H1 (cell line): ENCODE measurements at regions of chr11 and their contacts with region 1.

Region 1: GRCh38 chr11:46238967-46239800 is 38.3 kb upstream of the CREB3L1 start:
- DNase-seq: peak; percentile 83 to 97
- H3K4me3 ChIP-seq: peak overlapping the region; percentile 45 to 62 (median 56); a peak in 7 of 8 replicates
- H3K27ac ChIP-seq: no peak overlapping the region
- H3K4me1 ChIP-seq: peaks cover 4 to 25% (median 14%) of the 10 kb centered on the region in 4 experiments
- H3K27me3 ChIP-seq: peaks cover 4 to 13% (median 10%) of the 10 kb centered on the region in 4 experiments; a peak in 6 of 7 replicates
- CTCF ChIP-seq: peak; percentile 89 to 98 (median 96)
- EP300 ChIP-seq: peak in 1 of 2 experiments; percentile 30; a peak in 1 of 3 replicates
- POLR2A ChIP-seq: peak in 1 of 2 experiments; percentile 48; a peak in 1 of 3 replicates
- RAD21 ChIP-seq: peak; percentile 85 to 90

Region 2: DNA sequence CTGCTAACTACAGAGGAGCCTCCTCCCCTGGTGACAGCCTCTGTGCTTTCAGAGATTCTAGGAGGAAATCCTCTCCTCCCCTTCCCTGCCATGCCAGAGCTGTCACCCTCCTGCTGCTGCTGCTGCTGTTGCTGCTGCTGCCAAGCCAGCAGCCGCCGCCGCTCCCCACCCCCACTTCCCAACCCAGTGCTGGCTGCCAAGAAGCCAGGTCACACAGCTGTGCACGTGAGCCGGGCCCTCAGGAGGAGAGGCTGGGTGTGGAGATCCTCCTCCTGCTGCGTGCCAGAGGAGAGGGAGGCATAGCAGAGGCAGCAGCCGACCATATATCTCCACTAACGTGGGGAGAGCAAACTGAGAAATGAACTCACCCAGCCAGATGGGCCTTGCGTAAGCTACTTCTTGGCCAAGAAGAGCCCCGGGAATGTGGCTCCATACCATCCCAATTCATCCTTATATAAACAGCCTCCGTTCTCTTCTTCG is 379.5 kb before region 1 on chr11:
- CTCF ChIA-PET with region 1: no interaction called
- POLR2A ChIA-PET with region 1: no interaction called
- DNase-seq: no peak
- H3K4me3 ChIP-seq: no peak overlapping the region
- H3K27ac ChIP-seq: no peak overlapping the region
- H3K4me1 ChIP-seq: peaks cover 12 to 25% (median 16%) of the 10 kb centered on the region in 4 experiments; a peak in 6 of 7 replicates
- H3K27me3 ChIP-seq: no peaks in the 10 kb centered on the region
- CTCF ChIP-seq: no peak
- EP300 ChIP-seq: 0 out of 3 replicates have a peak, but pooled peaks of 1 of the 2 experiments have one; percentile 9
- POLR2A ChIP-seq: no peak
- RAD21 ChIP-seq: no peak

Region 3: DNA sequence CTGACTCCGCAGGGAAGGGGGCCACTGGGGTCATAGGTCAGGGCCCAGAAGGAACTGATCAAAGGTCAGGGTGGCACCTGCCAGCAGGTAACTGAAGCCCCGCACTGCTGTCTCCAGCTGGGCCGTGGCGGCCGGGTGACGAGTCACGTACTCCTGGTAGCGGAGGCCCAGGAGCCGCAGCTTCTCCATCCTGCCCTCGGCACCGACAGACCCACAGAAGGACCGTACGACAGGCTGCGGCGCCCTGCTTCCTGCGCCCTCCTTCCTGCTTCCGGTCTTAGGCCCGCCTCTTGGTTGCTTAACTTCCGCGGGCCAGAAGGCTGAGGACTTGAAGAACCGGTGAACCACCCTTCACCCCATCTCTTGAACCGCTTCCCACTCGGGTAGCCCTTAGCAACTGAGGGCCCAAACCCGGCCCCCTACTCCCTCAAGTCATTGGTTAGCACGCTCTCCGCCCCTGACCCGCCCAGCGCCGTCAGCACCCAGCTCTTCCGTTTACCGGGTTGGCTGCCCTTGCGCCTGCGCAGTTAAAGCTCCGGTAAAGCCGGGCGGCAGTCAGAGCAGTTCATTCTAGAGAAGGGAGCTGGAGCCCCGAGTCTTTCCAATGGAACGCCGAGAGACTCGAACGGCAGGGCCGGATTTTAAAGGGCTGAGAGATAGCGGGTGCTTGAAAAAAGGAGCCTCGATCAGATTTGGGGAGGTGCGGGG is 321.4 kb before region 1 on chr11 and contains the start of gene PEX16:
- CTCF ChIA-PET with region 1: interaction called, 3 read pairs
- POLR2A ChIA-PET with region 1: interaction called, 10 read pairs
- DNase-seq: peak; percentile 88 to 93
- H3K4me3 ChIP-seq: peak within 1 kb of the TSS; percentile 84 to 90 (median 88)
- H3K27ac ChIP-seq: peak within 1 kb of the TSS; percentile 64; the same call in 1 of the 2 replicates
- H3K4me1 ChIP-seq: peaks cover 12 to 28% (median 20%) of the 10 kb centered on the region in 4 experiments
- H3K27me3 ChIP-seq: peaks cover 0 to 9% (median 0%) of the 10 kb centered on the region in 4 experiments; a peak in 3 of 7 replicates
- CTCF ChIP-seq: no peak
- EP300 ChIP-seq: peak in 1 of 2 experiments; percentile 5; a peak in 1 of 3 replicates
- POLR2A ChIP-seq: peak in 1 of 2 experiments; percentile 63; a peak in 2 of 3 replicates
- RAD21 ChIP-seq: no peak
- total RNA-seq, gene PEX16: 29.2 and 29.4 TPM in 2 replicates

Region 4: GRCh38 chr11:45949992-45950407 is 289.2 kb before region 1 on chr11:
- CTCF ChIA-PET with region 1: no interaction called
- POLR2A ChIA-PET with region 1: no interaction called
- DNase-seq: no peak
- H3K4me3 ChIP-seq: no peak overlapping the region
- H3K27ac ChIP-seq: no peak overlapping the region
- H3K4me1 ChIP-seq: no peaks in the 10 kb centered on the region
- H3K27me3 ChIP-seq: no peaks in the 10 kb centered on the region
- CTCF ChIP-seq: no peak
- EP300 ChIP-seq: no peak
- POLR2A ChIP-seq: no peak
- RAD21 ChIP-seq: no peak

Region 5: GRCh38 chr11:46083972-46084371 is 155.2 kb before region 1 on chr11:
- CTCF ChIA-PET with region 1: no interaction called
- POLR2A ChIA-PET with region 1: no interaction called
- DNase-seq: no peak
- H3K4me3 ChIP-seq: no peak overlapping the region
- H3K27ac ChIP-seq: no peak overlapping the region
- H3K4me1 ChIP-seq: no peaks in the 10 kb centered on the region
- H3K27me3 ChIP-seq: no peaks in the 10 kb centered on the region
- CTCF ChIP-seq: no peak
- EP300 ChIP-seq: no peak
- POLR2A ChIP-seq: no peak
- RAD21 ChIP-seq: no peak

Region 6: GRCh38 chr11:46278387-46279125 is 39.4 kb after region 1 on chr11:
- CTCF ChIA-PET with region 1: interaction called, 43 read pairs
- POLR2A ChIA-PET with region 1: interaction called, 28 read pairs
- DNase-seq: peak in 1 of 2 experiments; percentile 92
- H3K4me3 ChIP-seq: peak overlapping the region; percentile 54 to 81 (median 64)
- H3K27ac ChIP-seq: no peak overlapping the region
- H3K4me1 ChIP-seq: peaks cover 18 to 35% (median 24%) of the 10 kb centered on the region in 4 experiments; a peak in 6 of 7 replicates
- H3K27me3 ChIP-seq: no peaks in the 10 kb centered on the region
- CTCF ChIP-seq: peak; percentile 68 to 86 (median 72)
- EP300 ChIP-seq: no peak
- POLR2A ChIP-seq: no peak
- RAD21 ChIP-seq: peak; percentile 43 to 69

Region 7: DNA sequence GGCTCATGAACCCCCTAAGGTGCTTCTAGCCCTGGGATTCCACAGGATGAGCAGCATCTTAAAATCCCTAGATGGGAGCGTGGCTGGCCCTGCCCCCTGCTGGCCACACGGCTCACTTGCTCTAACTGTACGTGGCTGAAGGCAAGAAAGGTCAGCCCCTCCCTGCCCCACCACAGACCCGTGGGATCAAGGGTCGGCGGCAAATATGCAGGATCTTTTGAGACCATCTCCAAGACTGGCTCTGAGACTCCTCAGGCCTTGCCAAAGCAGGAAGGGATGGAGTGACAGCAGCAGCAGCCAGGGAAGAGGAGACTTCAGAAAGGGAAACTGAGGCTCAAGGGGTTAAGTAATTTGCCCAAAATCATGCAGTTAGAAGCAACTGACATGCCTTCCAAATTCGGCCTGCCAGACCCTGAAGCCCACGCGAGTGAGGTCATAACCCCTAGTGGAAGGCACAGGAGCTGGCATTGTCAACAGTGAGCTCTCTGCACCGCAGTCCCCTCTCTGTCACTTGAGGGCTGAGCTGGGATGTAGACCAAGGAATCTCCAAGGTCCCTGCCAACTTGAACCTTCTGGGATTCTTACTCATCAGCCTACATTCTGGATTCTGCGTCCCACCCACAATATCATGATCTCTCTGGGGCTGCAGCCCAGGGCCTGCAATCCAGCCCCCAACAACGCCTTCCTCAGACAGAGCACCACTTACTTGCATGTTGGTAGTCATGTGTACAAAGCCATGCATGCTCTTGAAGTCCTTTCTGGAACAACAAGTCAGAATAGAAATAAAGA is 69.6 kb after region 1 on chr11:
- CTCF ChIA-PET with region 1: interaction called, 858 read pairs
- POLR2A ChIA-PET with region 1: interaction called, 77 read pairs
- DNase-seq: peak; percentile 60 to 89
- H3K4me3 ChIP-seq: no peak overlapping the region
- H3K27ac ChIP-seq: no peak overlapping the region
- H3K4me1 ChIP-seq: peaks cover 0 to 12% (median 7%) of the 10 kb centered on the region in 4 experiments; a peak in 6 of 7 replicates
- H3K27me3 ChIP-seq: no peaks in the 10 kb centered on the region
- CTCF ChIP-seq: peak; percentile 89 to 98 (median 94)
- EP300 ChIP-seq: no peak
- POLR2A ChIP-seq: no peak
- RAD21 ChIP-seq: peak; percentile 88 to 93

Region 8: GRCh38 chr11:46338988-46339666 is 99.9 kb after region 1 on chr11:
- CTCF ChIA-PET with region 1: interaction called, 5 read pairs
- POLR2A ChIA-PET with region 1: interaction called, 20 read pairs
- DNase-seq: peak; percentile 87 to 91
- H3K4me3 ChIP-seq: peak overlapping the region in 3 of 4 experiments; percentile 10 to 46 (median 29); a peak in 7 of 8 replicates
- H3K27ac ChIP-seq: peak overlapping the region; percentile 77
- H3K4me1 ChIP-seq: peaks cover 34 to 59% (median 53%) of the 10 kb centered on the region in 4 experiments
- H3K27me3 ChIP-seq: peaks cover under 1 to 5% (median 5%) of the 10 kb centered on the region in 4 experiments; a peak in 6 of 7 replicates
- CTCF ChIP-seq: peak in 1 of 3 experiments; percentile 3; a peak in 1 of 4 replicates
- EP300 ChIP-seq: peak in 1 of 2 experiments; percentile 85; a peak in 1 of 3 replicates
- POLR2A ChIP-seq: peak in 1 of 2 experiments; percentile 39; a peak in 2 of 3 replicates
- RAD21 ChIP-seq: no peak; a peak in 1 of 4 replicates

Region 9: GRCh38 chr11:46392421-46393230 is 153.4 kb after region 1 on chr11:
- CTCF ChIA-PET with region 1: interaction called, 17 read pairs
- POLR2A ChIA-PET with region 1: interaction called, 7 read pairs
- DNase-seq: peak in 1 of 2 experiments; percentile 97
- H3K4me3 ChIP-seq: peak overlapping the region; percentile 26 to 62 (median 40)
- H3K27ac ChIP-seq: no peak overlapping the region
- H3K4me1 ChIP-seq: peaks cover 3 to 17% (median 15%) of the 10 kb centered on the region in 4 experiments
- H3K27me3 ChIP-seq: peaks cover 19 to 43% (median 37%) of the 10 kb centered on the region in 4 experiments
- CTCF ChIP-seq: 0 out of 4 replicates have a peak, but pooled peaks of 1 of the 3 experiments have one; percentile 3
- EP300 ChIP-seq: peak in 1 of 2 experiments; percentile 34; a peak in 1 of 3 replicates
- POLR2A ChIP-seq: peak in 1 of 2 experiments; percentile 24; a peak in 1 of 3 replicates
- RAD21 ChIP-seq: peak in 1 of 2 experiments; percentile 23; a peak in 1 of 4 replicates